SK-N-SH (cell line): ENCODE measurements at regions of chr3 and their contacts with region 1.

Region 1: DNA sequence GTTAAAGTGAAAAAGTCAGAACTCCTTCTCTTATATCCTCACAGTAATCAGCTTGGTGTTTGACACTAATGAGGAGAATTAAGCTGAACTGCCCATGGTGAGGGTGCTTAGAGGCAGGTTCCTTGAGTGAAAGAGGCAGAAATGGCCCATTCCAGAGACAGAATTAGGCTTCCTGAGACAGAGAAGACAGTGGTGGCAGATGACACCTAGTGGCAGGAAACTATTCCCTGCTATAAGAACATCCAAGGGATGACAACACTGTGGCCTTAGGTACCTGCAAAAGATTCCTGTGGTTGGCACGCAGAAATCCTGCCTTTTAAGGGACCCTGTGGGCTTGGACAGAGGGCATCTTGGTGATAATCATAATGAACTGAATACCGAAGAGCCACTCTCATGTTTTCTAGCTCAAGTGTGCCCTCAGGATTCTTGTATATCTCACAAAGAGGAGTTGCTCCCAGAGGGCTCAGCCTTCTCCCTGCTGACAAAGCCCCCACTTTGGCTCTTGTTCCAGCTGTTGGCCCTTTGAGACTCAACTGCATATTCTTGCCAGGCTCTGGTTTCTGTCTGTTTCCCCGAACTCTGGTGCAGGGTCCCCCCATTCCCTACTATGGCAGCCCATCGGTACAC is 56.0 kb downstream of the KBTBD12 start:
- DNase-seq: peak; percentile 51
- H3K4me3 ChIP-seq: peak overlapping the region in 1 of 2 experiments; percentile 33; a peak in 1 of 4 replicates
- H3K27ac ChIP-seq: no peak overlapping the region
- H3K4me1 ChIP-seq: peaks cover 0 to 9% of the 10 kb centered on the region in 2 experiments; a peak in 2 of 4 replicates
- H3K27me3 ChIP-seq: peaks cover 6% of the 10 kb centered on the region; the same call in 1 of the 2 replicates
- CTCF ChIP-seq: peak; percentile 73
- EP300 ChIP-seq: no peak
- RAD21 ChIP-seq: peak; percentile 91

Region 2: DNA sequence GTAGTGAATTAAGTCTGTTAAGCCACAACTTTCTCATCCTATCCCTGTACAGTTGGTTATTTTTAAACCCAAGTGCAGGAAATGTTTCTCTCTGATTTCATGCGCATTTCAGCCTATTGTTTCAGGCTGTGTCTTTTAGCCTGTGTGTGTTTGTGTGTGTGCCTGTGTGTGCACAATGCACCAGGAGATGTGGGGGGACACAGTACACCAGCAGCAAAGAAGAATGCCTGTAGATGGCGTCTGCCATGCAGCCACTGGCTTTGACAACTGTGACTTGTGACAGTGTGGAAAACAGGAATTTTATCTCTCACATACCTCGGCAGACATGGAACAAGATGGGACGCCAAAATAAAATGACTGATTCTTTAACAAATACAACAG is 1031.8 kb before region 1 on chr3:
- CTCF ChIA-PET with region 1: no interaction called
- POLR2A ChIA-PET with region 1: no interaction called
- DNase-seq: peak; percentile 48
- H3K4me3 ChIP-seq: no peak overlapping the region
- H3K27ac ChIP-seq: peak overlapping the region; percentile 27 to 43; a peak in 3 of 4 replicates
- H3K4me1 ChIP-seq: peaks cover 32 to 43% of the 10 kb centered on the region in 2 experiments
- H3K27me3 ChIP-seq: no peaks in the 10 kb centered on the region
- CTCF ChIP-seq: peak; percentile 30
- EP300 ChIP-seq: no peak
- RAD21 ChIP-seq: peak; percentile 53

Region 3: DNA sequence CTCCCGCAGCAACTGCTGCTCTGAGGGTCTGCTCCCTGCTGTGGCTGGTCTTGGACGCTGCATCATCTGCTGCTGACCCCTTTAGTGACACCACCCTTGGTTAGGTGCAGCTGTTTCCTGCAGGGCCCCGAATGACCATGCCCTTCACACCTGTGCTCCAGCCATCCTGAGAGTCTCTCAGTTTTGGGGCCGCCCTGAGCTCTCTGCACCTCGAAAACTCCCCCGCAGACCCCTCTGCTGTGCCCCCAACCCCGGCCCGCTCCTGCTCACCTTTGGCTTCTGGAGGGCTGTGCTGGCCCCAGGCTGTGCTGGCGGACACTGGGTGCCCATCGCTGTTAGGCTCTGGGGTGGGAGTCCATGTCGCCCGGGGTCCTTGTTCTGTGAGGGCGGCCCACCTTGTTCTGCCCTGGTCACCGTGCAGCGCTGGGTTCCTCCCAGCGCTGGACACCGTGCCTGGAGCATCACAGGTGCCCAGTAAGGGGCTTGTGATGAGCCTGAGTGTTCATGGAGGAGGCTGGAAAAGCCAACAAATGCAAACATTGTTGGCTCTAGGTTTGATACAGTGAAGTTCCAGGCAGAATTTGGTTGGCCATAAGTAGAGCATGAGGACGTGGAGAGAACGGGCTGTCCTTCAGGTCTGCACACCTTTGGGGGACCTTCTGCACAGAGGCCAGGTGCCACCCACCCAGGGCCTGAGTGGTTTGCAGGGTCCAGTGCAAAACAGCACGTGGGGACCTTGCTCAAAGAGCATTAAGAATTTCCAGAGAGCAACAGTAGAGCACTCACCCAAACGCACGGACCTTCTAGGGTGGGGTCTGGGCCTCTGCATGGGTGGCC is 286.0 kb before region 1 on chr3:
- CTCF ChIA-PET with region 1: interaction called, 29 read pairs
- POLR2A ChIA-PET with region 1: no interaction called
- DNase-seq: no peak
- H3K4me3 ChIP-seq: no peak overlapping the region
- H3K27ac ChIP-seq: no peak overlapping the region
- H3K4me1 ChIP-seq: peaks cover 6 to 26% of the 10 kb centered on the region in 2 experiments; a peak in 3 of 4 replicates
- H3K27me3 ChIP-seq: no peaks in the 10 kb centered on the region
- CTCF ChIP-seq: no peak
- EP300 ChIP-seq: no peak
- RAD21 ChIP-seq: no peak

Region 4: GRCh38 chr3:127815641-127816610 is 155.2 kb before region 1 on chr3:
- CTCF ChIA-PET with region 1: no interaction called
- POLR2A ChIA-PET with region 1: no interaction called
- DNase-seq: no peak
- H3K4me3 ChIP-seq: no peak overlapping the region
- H3K27ac ChIP-seq: no peak overlapping the region
- H3K4me1 ChIP-seq: peaks cover 0 to 9% of the 10 kb centered on the region in 2 experiments; a peak in 2 of 4 replicates
- H3K27me3 ChIP-seq: no peaks in the 10 kb centered on the region
- CTCF ChIP-seq: no peak
- EP300 ChIP-seq: no peak
- RAD21 ChIP-seq: no peak

Region 5: GRCh38 chr3:127949446-127950055 is 21.5 kb before region 1 on chr3:
- CTCF ChIA-PET with region 1: no interaction called
- POLR2A ChIA-PET with region 1: no interaction called
- DNase-seq: no peak
- H3K4me3 ChIP-seq: no peak overlapping the region
- H3K27ac ChIP-seq: no peak overlapping the region
- H3K4me1 ChIP-seq: no peaks in the 10 kb centered on the region; a peak in 1 of 4 replicates
- H3K27me3 ChIP-seq: no peaks in the 10 kb centered on the region; the same call in 1 of the 2 replicates
- CTCF ChIP-seq: no peak
- EP300 ChIP-seq: no peak
- RAD21 ChIP-seq: no peak

Region 6: GRCh38 chr3:128383316-128384235 is 412.5 kb after region 1 on chr3:
- CTCF ChIA-PET with region 1: no interaction called
- POLR2A ChIA-PET with region 1: no interaction called
- DNase-seq: peak; percentile 91
- H3K4me3 ChIP-seq: no peak overlapping the region
- H3K27ac ChIP-seq: peak overlapping the region in 1 of 2 experiments; percentile 64; a peak in 2 of 4 replicates
- H3K4me1 ChIP-seq: peaks cover 9 to 71% of the 10 kb centered on the region in 2 experiments; a peak in 3 of 4 replicates
- H3K27me3 ChIP-seq: no peaks in the 10 kb centered on the region
- CTCF ChIP-seq: no peak
- EP300 ChIP-seq: peak in 1 of 2 experiments; percentile 50; a peak in 1 of 4 replicates
- RAD21 ChIP-seq: no peak; the same call in 1 of the 2 replicates